A549 (cell line): ENCODE measurements at regions of chr22 and their contacts with region 1.

Region 1: DNA sequence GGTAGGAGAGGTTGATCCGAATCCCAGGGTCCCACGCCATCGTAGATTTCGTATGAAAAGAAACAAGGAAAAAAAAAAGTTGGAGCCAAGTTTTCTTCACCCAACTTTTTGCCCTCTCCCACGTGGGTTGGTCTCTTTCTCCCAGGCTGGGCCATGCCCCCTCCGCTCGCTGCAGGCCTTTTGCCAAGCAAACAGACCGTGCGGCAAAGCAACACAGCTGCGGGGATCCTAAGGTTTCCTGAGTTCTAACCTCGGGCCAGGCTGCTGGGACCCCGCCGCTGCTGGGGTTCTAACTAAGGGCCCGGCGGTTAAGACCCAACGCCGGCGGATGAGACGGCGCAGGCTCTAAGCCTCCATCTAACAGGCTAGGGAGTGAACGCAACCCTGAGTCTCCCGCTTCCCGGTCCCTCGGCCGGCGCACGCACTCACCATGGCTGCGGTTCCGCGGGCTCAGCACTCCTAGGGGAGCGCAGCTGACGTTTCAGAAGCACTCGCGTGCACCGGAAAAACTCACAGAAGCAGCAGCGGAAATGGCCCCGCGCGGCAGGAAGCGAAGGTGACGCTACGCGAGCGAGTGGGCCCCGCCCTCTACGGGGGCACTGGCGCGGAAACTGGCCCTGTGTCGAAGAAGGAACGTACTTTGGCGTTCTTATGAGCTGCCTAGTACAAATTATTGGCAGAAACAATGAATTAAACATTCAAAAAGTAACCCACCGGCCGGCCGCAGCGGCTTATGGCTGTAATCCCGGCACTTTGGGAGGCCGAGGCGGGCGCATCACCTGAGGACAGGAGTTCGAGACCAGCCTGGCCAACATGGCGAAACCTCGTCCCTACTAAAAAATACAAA is at the start of gene SNU13:
- DNase-seq: peak; percentile 78 to 90
- ATAC-seq: peak; percentile 98 to 99
- H3K4me3 ChIP-seq: peak within 1 kb of the TSS; percentile 84
- H3K27ac ChIP-seq: peak within 1 kb of the TSS; percentile 97 to 99
- H3K4me1 ChIP-seq: peaks cover 6% of the 10 kb centered on the region; the same call in 2 of the 3 replicates
- CTCF ChIP-seq: no peak
- EP300 ChIP-seq: no peak
- POLR2A ChIP-seq: peak; percentile 69
- RAD21 ChIP-seq: no peak
- polyA plus RNA-seq, gene SNU13: 113 and 118 TPM in 2 replicates

Region 2: GRCh38 chr22:41565403-41566054 is 123.1 kb before region 1 on chr22:
- CTCF ChIA-PET with region 1: no interaction called
- POLR2A ChIA-PET with region 1: interaction called, 11 read pairs
- DNase-seq: peak; percentile 71 to 73
- ATAC-seq: peak; percentile 76 to 84
- H3K4me3 ChIP-seq: no peak overlapping the region
- H3K27ac ChIP-seq: peak overlapping the region; percentile 65 to 82
- H3K4me1 ChIP-seq: peaks cover 54% of the 10 kb centered on the region
- CTCF ChIP-seq: no peak
- EP300 ChIP-seq: no peak
- POLR2A ChIP-seq: no peak
- RAD21 ChIP-seq: no peak

Region 3: GRCh38 chr22:41672775-41673509 is 15.6 kb before region 1 on chr22:
- CTCF ChIA-PET with region 1: interaction called, 10 read pairs
- POLR2A ChIA-PET with region 1: no interaction called
- DNase-seq: peak; percentile 46 to 58
- ATAC-seq: peak; percentile 70 to 74; a peak in 5 of 6 replicates
- H3K4me3 ChIP-seq: no peak overlapping the region
- H3K27ac ChIP-seq: peak overlapping the region; percentile 40 to 57; a peak in 4 of 6 replicates
- H3K4me1 ChIP-seq: peaks cover 49% of the 10 kb centered on the region
- CTCF ChIP-seq: peak; percentile 54
- EP300 ChIP-seq: no peak
- POLR2A ChIP-seq: no peak
- RAD21 ChIP-seq: peak in 1 of 2 experiments; percentile 30; a peak in 3 of 5 replicates

Region 4: GRCh38 chr22:41722496-41722895 is 33.9 kb after region 1 on chr22:
- CTCF ChIA-PET with region 1: no interaction called
- POLR2A ChIA-PET with region 1: no interaction called
- DNase-seq: no peak
- ATAC-seq: no peak
- H3K4me3 ChIP-seq: no peak overlapping the region
- H3K27ac ChIP-seq: no peak overlapping the region
- H3K4me1 ChIP-seq: no peaks in the 10 kb centered on the region
- CTCF ChIP-seq: no peak
- EP300 ChIP-seq: no peak
- POLR2A ChIP-seq: no peak
- RAD21 ChIP-seq: no peak